Activated CD8-positive, alpha-beta T cell treated with anti-CD3 and anti-CD28 coated beads, Interleukin-2, amount 10 ng/mL, durations not matched to agents 7 days and 5 days (primary cell): ENCODE measurements at regions of chr3 and their contacts with region 1.

Region 1: DNA sequence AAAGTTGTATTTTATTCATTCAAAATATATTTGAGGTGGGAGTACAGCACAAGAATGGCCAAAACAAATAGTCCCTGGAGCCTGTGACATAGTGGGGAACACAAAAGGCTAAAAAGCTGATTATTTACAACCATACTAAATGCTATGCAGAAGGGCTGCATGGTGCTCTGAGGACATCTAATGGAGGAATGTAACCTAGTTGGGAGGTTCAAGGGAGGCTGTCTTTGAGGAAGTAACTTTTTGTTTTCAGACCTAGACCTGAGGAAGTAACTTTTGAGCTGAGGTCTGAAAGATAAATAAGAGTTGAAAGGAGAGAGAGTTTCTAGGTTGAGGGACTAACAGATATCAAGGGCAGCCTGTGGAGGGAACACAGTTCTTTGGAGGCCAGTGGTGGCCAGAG is 34.8 kb upstream of the RASA2 start:
- DNase-seq: peak; percentile 76
- ATAC-seq: peak; percentile 90
- H3K4me3 Mint-ChIP-seq: no peak overlapping the region
- H3K27ac Mint-ChIP-seq: no peak overlapping the region
- H3K4me1 Mint-ChIP-seq: peaks cover 8% of the 10 kb centered on the region
- H3K27me3 Mint-ChIP-seq: no peaks in the 10 kb centered on the region

Region 2: GRCh38 chr3:141231101-141231935 is 220.7 kb before region 1 on chr3 and contains the start of gene PXYLP1:
- CTCF ChIA-PET with region 1: interaction called, 31 read pairs
- POLR2A ChIA-PET with region 1: interaction called, 3 read pairs
- DNase-seq: peak; percentile 93
- ATAC-seq: peak; percentile 94
- H3K4me3 Mint-ChIP-seq: peak within 1 kb of the TSS; percentile 87
- H3K27ac Mint-ChIP-seq: peak within 1 kb of the TSS; percentile 96
- H3K4me1 Mint-ChIP-seq: peaks cover 50% of the 10 kb centered on the region
- H3K27me3 Mint-ChIP-seq: no peaks in the 10 kb centered on the region
- total RNA-seq, gene PXYLP1: 15.0 to 16.5 TPM

Region 3: DNA sequence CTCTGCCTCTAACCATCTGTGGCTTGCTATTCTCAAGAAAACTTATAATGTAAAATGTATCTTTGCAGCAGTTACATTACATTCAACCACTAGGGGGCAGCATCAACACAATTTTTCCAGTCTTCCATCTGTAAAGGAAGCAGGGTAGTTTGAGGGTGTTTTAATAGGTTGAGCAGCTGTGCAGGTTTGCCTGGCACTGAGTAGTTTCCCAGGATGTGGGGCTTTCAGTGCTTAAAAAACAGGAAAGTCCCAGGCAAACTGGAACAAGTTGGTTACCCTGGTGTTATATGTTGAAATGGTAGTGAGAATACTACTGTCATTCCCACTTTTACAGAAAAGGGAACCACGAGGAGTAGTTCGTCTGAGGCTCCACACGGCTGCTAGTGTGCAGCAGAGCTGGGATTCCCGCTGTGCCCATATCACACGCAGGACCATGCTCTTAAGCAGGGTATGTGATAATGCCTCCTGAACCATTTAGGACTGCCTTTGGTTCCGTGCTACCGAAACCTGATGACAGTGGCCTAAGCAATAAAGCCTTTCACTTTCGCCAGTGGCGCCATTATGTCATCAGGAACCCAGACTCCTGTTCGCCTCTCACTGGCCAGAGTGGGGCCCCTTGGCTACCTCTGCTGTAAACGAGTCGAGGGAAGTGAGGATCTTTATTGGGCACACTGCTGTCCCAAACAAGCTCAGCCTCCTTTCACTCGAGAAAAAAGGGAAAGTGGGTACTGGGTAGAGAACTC is 148.4 kb before region 1 on chr3:
- CTCF ChIA-PET with region 1: interaction called, 267 read pairs
- POLR2A ChIA-PET with region 1: no interaction called
- DNase-seq: peak; percentile 83
- ATAC-seq: peak; percentile 74
- H3K4me3 Mint-ChIP-seq: no peak overlapping the region
- H3K27ac Mint-ChIP-seq: no peak overlapping the region
- H3K4me1 Mint-ChIP-seq: peaks cover 53% of the 10 kb centered on the region
- H3K27me3 Mint-ChIP-seq: peaks cover 2% of the 10 kb centered on the region

Region 4: GRCh38 chr3:141353652-141354495 is 98.2 kb before region 1 on chr3:
- CTCF ChIA-PET with region 1: interaction called, 185 read pairs
- POLR2A ChIA-PET with region 1: no interaction called
- DNase-seq: no peak
- ATAC-seq: no peak
- H3K4me3 Mint-ChIP-seq: no peak overlapping the region
- H3K27ac Mint-ChIP-seq: no peak overlapping the region
- H3K4me1 Mint-ChIP-seq: no peaks in the 10 kb centered on the region
- H3K27me3 Mint-ChIP-seq: peaks cover 17% of the 10 kb centered on the region

Region 5: DNA sequence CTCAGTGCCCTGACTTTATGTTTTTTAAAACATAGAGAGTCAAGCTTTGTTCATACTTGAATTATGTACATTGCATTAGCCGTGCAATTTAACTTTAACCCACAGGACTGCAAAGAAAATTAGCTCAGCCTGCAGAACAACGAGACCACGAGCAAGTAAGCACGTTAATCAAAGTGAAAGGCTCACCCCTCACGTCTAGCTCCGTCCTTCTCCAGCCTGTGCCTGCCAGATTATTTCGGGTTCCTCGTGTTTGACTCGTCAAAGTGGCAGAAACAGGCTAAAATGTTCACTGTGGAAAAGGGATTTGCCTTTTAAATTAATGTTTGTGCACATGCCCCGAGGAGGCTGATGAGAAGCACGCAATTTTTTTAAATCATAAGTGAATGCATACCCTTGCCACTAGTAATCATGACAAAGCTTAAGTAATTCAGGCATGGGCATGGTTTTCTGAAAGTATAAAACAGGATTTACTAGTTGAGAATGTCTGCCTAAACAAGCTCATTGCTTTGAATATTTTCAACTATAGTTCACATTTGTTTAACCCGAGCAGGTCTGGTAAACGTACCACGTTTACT is 68.4 kb before region 1 on chr3:
- CTCF ChIA-PET with region 1: interaction called, 13 read pairs
- POLR2A ChIA-PET with region 1: no interaction called
- DNase-seq: no peak
- ATAC-seq: no peak
- H3K4me3 Mint-ChIP-seq: no peak overlapping the region
- H3K27ac Mint-ChIP-seq: no peak overlapping the region
- H3K4me1 Mint-ChIP-seq: peaks cover 11% of the 10 kb centered on the region
- H3K27me3 Mint-ChIP-seq: peaks cover 18% of the 10 kb centered on the region

Region 6: DNA sequence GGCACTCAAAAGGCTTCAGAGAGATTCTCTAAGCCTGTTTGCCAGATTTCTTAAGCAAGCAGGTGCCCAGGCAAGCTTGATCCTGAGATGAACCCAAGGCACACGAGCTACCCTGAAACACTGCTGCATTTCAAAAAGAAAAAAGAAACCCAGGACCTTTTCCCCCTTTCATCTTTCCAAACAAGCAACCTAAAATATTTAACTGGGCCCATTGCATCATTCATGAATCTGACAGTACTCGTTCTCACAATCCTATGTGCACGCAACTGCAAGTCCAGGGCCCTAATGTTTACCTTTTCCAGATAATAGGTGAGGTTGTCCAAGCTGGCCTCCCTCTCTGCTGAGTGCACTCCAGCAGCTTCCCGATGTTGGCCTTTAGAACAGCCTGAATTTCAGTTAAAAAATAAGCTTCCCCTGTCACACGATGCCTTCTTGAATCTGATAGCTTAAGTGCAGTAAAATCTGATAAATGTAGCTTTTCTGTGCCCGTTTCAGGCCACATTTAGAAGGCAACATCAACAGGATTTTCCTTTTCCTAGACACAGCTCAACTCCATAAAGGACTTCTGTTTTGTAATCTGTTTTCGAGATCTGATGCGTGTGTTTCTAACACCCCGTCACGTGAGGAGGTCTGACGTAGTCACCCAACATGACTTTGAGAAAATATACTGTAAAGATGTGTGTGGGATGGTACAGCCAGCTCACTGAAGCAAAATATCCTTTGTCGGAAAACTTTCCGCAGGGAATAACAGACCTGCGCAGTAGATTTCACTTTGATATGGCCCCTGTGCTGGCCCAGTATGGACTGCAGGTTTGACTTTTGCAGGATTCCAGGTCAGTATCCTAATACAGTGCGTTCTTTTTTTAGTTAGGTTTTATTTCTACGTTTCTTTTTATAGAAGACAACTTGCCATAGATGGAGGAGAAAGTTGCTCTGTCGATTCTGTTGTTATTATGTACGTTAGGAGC is 20.3 kb before region 1 on chr3:
- CTCF ChIA-PET with region 1: interaction called, 12 read pairs
- POLR2A ChIA-PET with region 1: no interaction called
- DNase-seq: no peak
- ATAC-seq: no peak
- H3K4me3 Mint-ChIP-seq: no peak overlapping the region
- H3K27ac Mint-ChIP-seq: no peak overlapping the region
- H3K4me1 Mint-ChIP-seq: no peaks in the 10 kb centered on the region
- H3K27me3 Mint-ChIP-seq: no peaks in the 10 kb centered on the region

Region 7: GRCh38 chr3:141561426-141562034 is 109.5 kb after region 1 on chr3:
- CTCF ChIA-PET with region 1: interaction called, 29 read pairs
- POLR2A ChIA-PET with region 1: no interaction called
- DNase-seq: peak; percentile 69
- ATAC-seq: peak; percentile 60
- H3K4me3 Mint-ChIP-seq: no peak overlapping the region
- H3K27ac Mint-ChIP-seq: no peak overlapping the region
- H3K4me1 Mint-ChIP-seq: peaks cover 22% of the 10 kb centered on the region
- H3K27me3 Mint-ChIP-seq: no peaks in the 10 kb centered on the region